ENCODE measurements at regions of chr5 and their contacts with region 1.

Region 1: DNA sequence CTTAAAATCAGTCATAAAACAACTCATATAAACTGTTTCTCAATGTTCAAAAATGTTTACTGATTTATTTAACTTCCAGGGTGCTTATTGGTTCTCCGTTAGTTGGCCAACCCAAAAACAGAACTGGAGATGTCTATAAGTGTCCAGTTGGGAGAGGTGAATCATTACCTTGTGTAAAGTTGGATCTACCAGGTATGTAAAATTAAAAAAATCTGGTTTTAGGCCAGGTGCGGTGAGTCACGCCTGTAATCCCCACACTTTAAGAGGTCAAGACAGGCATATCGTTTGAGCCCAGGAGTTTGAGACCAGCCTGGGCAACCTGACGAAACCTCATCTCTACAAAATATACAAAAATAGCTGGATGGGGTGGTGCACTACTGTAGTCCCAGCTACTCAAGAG is 73.7 kb downstream of the ITGA1 start:
- DNase-seq: peak; percentile 92
- H3K27ac ChIP-seq: no peak overlapping the region
- CTCF ChIP-seq: no peak

Region 2: GRCh38 chr5:52811067-52811749 is 50.2 kb before region 1 on chr5:
- CTCF ChIA-PET with region 1: interaction called, 11 read pairs
- POLR2A ChIA-PET with region 1: no interaction called
- DNase-seq: no peak
- H3K27ac ChIP-seq: no peak overlapping the region
- CTCF ChIP-seq: no peak

Measured in RWPE1 (cell line).